Activated CD8-positive, alpha-beta memory T cell treated with anti-CD3 and anti-CD28 coated beads, Interleukin-2, amount 10 ng/mL, durations not matched to agents 7 days and 5 days (primary cell): ENCODE measurements at regions of chr11 and their contacts with region 1.

Region 1: DNA sequence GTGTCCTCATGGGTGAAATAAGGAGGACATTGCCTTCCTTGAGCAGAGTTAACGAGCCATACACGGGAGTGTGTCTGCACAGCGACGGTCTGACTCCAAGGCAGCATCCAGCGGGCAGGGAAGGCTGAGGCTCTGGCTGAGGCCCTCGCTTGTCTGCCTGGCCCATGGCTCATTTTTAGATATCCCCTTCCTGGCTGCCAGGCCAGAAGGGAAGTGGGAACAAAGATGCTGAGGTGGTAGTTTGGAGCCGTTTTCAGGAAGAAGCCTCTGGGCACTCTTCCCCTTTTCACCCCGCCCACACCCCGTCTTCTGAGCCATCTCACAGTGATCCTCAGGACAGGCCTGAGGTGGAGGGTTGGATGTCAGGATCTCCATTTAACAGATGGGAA is 3.0 kb upstream of the SLCO2B1 start:
- DNase-seq: no peak
- ATAC-seq: no peak
- H3K4me3 Mint-ChIP-seq: no peak overlapping the region
- H3K27ac Mint-ChIP-seq: no peak overlapping the region
- H3K4me1 Mint-ChIP-seq: peaks cover 47% of the 10 kb centered on the region
- H3K27me3 Mint-ChIP-seq: peaks cover 53% of the 10 kb centered on the region

Region 2: GRCh38 chr11:75051043-75051442 is 96.8 kb before region 1 on chr11:
- CTCF ChIA-PET with region 1: no interaction called
- DNase-seq: no peak
- ATAC-seq: no peak
- H3K4me3 Mint-ChIP-seq: no peak overlapping the region
- H3K27ac Mint-ChIP-seq: no peak overlapping the region
- H3K4me1 Mint-ChIP-seq: no peaks in the 10 kb centered on the region
- H3K27me3 Mint-ChIP-seq: peaks cover 31% of the 10 kb centered on the region

Region 3: DNA sequence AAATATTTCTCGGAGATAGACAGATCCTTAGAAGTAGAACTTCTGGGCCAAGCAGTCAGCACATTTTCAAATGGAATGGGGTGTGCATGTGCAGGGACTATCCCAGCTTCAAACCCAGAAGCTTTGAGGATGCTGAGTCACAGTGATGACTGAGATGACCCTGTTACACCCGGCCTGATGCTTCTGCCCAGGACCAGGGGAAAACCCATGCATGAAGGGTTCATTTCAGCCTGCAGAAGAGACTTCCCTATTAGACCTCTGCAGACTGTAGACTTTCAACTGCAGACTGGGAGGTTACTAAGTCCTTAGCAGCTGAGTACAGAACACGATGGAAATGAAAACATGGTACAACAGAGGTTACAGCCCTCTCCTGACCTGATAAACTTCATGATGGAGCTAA is 47.6 kb before region 1 on chr11:
- CTCF ChIA-PET with region 1: no interaction called
- DNase-seq: peak; percentile 56
- ATAC-seq: peak; percentile 89
- H3K4me3 Mint-ChIP-seq: no peak overlapping the region
- H3K27ac Mint-ChIP-seq: no peak overlapping the region
- H3K4me1 Mint-ChIP-seq: peaks cover 25% of the 10 kb centered on the region
- H3K27me3 Mint-ChIP-seq: peaks cover 55% of the 10 kb centered on the region

Region 4: GRCh38 chr11:75195121-75195551 is 47.3 kb after region 1 on chr11:
- CTCF ChIA-PET with region 1: interaction called, 556 read pairs
- DNase-seq: no peak
- ATAC-seq: no peak
- H3K4me3 Mint-ChIP-seq: no peak overlapping the region
- H3K27ac Mint-ChIP-seq: no peak overlapping the region
- H3K4me1 Mint-ChIP-seq: no peaks in the 10 kb centered on the region
- H3K27me3 Mint-ChIP-seq: peaks cover 24% of the 10 kb centered on the region